ENCODE measurements at regions of chr5 and their contacts with region 1.

Region 1: DNA sequence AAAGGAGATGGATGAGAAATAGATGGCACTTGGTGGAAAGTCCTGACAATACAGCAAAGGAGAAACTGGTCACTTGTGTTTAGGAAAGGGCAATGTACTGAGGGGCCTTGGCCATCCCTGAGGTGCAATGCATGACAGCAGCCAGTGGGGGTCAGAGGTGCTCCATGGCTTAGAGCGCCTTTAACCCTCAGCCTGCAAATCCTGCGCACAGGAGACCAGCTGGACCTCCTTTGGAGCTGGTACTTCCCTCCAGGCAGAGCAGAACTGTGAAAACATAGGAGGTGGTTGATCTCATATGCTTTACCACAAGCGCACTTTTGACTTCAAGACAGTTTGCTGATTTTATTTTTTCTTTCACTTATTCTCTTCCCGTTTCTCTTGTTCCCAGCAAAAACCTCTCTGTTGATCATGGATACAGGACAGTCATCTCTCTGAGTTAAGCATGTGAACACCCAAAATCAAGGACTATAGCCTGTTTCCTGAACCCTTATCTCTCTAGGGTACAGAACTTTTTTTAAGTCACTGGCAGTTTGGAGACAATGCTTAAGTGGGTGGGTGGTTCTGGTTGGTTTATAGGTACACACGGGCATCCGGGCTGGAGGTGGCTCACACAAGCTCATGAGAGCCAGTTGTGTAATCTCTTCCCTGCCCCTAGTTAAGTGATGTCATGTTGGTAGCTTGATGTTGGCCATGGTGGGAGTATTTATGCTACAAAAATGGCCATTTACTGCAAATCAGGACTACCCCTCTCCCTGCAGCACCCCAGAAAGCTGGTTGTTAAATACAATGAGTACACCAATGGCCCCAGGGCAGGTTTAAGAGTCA is 37.6 kb upstream of the ANKRD55 start:
- DNase-seq: peak; percentile 85
- H3K4me3 Mint-ChIP-seq: no peak overlapping the region
- H3K27ac Mint-ChIP-seq: no peak overlapping the region
- H3K4me1 Mint-ChIP-seq: peaks cover 5% of the 10 kb centered on the region
- H3K27me3 Mint-ChIP-seq: no peaks in the 10 kb centered on the region
- CTCF ChIP-seq: peak; percentile 98

Region 2: DNA sequence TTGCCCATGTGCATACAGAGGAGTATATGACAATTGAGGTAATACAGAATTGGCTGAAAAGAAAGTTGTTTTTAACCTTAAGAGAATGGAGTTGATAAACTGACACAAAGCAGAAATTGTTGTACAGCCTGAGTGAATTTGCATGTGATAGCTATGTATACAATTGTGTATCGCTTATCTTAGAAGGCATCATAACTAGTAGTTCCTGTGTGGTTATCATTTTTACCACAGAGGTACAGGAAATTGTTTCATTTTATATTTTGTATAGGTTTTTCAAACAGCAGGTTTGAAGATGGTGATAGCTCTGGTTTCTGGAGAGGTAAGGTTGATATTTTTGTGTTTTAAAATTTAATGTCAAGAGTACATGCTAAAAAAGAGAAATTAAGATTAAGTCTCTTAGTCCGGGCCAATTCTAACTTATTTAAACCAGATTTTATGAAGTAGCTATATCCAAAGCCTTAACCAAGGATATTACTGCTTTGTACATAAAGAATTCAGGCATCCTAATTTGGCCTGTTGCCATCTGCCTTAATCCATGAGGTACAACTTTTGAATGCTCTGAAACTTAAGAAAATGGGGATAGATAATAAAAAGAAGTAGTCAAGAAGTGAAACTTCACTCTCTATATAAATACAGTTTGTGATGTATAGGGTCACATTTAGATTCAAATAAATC is 506.9 kb before region 1 on chr5:
- CTCF ChIA-PET with region 1: no interaction called
- POLR2A ChIA-PET with region 1: no interaction called
- intact Hi-C with region 1: no loop called
- DNase-seq: no peak
- H3K4me3 Mint-ChIP-seq: no peak overlapping the region
- H3K27ac Mint-ChIP-seq: no peak overlapping the region
- H3K4me1 Mint-ChIP-seq: no peaks in the 10 kb centered on the region
- H3K27me3 Mint-ChIP-seq: no peaks in the 10 kb centered on the region
- CTCF ChIP-seq: no peak

Region 3: DNA sequence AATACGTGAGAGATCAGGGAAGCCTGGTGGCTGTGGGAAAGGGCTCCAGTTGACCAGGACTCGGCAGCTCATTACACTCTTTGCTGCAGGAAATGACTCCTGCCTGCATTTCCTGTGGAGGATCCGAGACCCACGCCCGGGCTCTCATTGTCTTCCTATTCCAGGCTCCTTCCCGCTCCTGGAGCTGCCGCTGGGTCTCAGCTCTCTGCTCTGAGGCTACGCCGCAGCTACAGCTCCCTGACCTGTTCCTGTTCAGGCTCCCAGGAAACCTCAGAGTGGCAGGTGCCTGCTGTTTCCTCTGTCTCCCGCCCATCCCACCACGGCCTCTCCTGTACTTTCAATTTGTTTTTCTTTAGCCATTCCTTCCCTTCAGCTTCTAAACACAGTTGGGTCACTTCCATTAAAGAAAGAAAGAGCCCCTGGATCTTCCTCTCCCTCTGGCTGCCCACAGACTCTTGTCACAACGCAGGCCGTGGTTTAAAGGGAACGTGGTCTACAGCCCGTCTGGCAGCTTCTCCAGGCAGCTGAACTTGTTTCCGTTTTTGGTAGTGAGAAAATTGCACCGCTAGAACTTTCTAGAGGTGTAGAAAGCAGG is 347.5 kb before region 1 on chr5:
- CTCF ChIA-PET with region 1: no interaction called
- POLR2A ChIA-PET with region 1: no interaction called
- intact Hi-C with region 1: no loop called
- DNase-seq: no peak
- H3K4me3 Mint-ChIP-seq: no peak overlapping the region
- H3K27ac Mint-ChIP-seq: no peak overlapping the region
- H3K4me1 Mint-ChIP-seq: no peaks in the 10 kb centered on the region
- H3K27me3 Mint-ChIP-seq: no peaks in the 10 kb centered on the region
- CTCF ChIP-seq: no peak

Region 4: DNA sequence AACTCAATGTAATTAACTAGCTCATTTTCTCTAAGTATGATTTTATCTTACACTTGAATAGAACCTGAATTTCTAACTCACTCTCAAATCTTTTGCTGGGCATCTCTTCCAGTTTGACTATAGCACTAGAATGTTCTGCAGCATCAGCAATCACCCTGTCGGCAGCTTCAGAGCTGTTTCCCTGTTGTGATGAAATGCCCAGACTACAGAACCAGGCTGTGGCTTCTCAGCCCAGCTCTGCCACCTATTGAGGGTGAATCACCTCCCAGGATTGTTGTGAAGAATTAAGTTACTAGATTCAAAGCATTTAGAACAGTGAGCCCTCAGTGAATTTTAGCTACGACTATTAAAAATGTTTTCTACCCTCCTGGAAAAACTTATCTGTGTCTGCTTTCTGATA is 52.7 kb after region 1 on chr5:
- CTCF ChIA-PET with region 1: interaction called, 19 read pairs
- POLR2A ChIA-PET with region 1: interaction called, 4 read pairs
- intact Hi-C with region 1: no loop called
- DNase-seq: peak; percentile 81
- H3K4me3 Mint-ChIP-seq: no peak overlapping the region
- H3K27ac Mint-ChIP-seq: no peak overlapping the region
- H3K4me1 Mint-ChIP-seq: peaks cover 25% of the 10 kb centered on the region
- H3K27me3 Mint-ChIP-seq: no peaks in the 10 kb centered on the region
- CTCF ChIP-seq: no peak

Region 5: GRCh38 chr5:56565644-56566043 is 294.9 kb after region 1 on chr5:
- CTCF ChIA-PET with region 1: no interaction called
- POLR2A ChIA-PET with region 1: no interaction called
- intact Hi-C with region 1: no loop called
- DNase-seq: no peak
- H3K4me3 Mint-ChIP-seq: no peak overlapping the region
- H3K27ac Mint-ChIP-seq: no peak overlapping the region
- H3K4me1 Mint-ChIP-seq: peaks cover 7% of the 10 kb centered on the region
- H3K27me3 Mint-ChIP-seq: no peaks in the 10 kb centered on the region
- CTCF ChIP-seq: no peak

Region 6: DNA sequence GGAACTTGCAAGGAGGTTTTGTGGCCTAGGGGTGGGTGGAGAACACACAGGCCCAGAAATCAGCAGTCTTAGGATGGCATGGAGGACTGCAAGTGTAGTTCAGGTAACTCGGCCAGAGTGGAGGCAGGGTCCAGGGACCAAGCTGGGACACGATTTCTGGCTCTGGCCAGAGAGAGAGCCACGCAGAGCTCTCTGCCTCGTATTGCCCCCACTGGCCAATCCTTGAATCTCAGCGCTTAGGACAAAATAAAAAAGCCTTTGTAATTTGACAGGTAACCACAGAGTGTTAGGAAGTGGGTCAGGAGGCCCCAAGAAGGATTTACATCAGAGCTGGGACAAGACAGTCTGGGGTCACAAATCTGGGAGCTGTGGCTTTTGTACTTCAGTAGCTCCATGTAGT is 556.3 kb after region 1 on chr5:
- CTCF ChIA-PET with region 1: interaction called, 422 read pairs
- POLR2A ChIA-PET with region 1: interaction called, 4 read pairs
- intact Hi-C with region 1: no loop called
- DNase-seq: no peak
- H3K4me3 Mint-ChIP-seq: no peak overlapping the region
- H3K27ac Mint-ChIP-seq: peak overlapping the region; percentile 44
- H3K4me1 Mint-ChIP-seq: peaks cover 32% of the 10 kb centered on the region
- H3K27me3 Mint-ChIP-seq: no peaks in the 10 kb centered on the region
- CTCF ChIP-seq: peak; percentile 17

Region 7: DNA sequence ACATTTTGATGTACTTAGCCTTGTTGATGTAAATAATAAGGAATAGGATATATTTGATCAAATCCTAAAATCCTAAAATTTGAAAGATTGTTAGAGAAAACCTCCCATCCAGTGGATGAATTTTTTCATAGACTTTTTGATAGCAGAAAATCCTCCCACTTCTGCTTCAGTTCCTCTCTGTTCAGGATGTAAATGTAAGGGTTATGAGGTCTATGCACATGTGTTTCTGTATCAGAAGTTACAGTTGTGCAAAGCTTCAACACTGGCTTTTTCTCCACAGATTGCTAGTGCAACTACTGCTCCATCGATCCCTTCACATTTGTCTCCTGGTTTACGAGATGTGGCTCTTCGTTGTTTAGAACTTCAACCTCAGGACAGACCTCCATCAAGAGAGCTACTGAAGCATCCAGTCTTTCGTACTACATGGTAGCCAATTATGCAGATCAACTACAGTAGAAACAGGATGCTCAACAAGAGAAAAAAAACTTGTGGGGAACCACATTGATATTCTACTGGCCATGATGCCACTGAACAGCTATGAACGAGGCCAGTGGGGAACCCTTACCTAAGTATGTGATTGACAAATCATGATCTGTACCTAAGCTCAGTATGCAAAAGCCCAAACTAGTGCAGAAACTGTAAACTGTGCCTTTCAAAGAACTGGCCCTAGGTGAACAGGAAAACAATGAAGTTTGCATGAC is 622.6 kb after region 1 on chr5:
- CTCF ChIA-PET with region 1: interaction called, 26 read pairs
- POLR2A ChIA-PET with region 1: interaction called, 3 read pairs
- intact Hi-C with region 1: no loop called
- DNase-seq: no peak
- H3K4me3 Mint-ChIP-seq: no peak overlapping the region
- H3K27ac Mint-ChIP-seq: no peak overlapping the region
- H3K4me1 Mint-ChIP-seq: no peaks in the 10 kb centered on the region
- H3K27me3 Mint-ChIP-seq: no peaks in the 10 kb centered on the region
- CTCF ChIP-seq: no peak

Region 8: GRCh38 chr5:57221049-57221568 is 950.3 kb after region 1 on chr5:
- CTCF ChIA-PET with region 1: interaction called, 5 read pairs
- POLR2A ChIA-PET with region 1: no interaction called
- intact Hi-C with region 1: loop called (anchors 5 kb)
- DNase-seq: peak; percentile 70
- H3K4me3 Mint-ChIP-seq: no peak overlapping the region
- H3K27ac Mint-ChIP-seq: peak overlapping the region; percentile 42
- H3K4me1 Mint-ChIP-seq: peaks cover 15% of the 10 kb centered on the region
- H3K27me3 Mint-ChIP-seq: no peaks in the 10 kb centered on the region
- CTCF ChIP-seq: peak; percentile 81